ENCODE measurements at regions of chr19 and their contacts with region 1.

Region 1: GRCh38 chr19:18364826-18365528 is 21.0 kb upstream of the GDF15 start:
- DNase-seq: peak; percentile 82 to 87 (median 85)
- H3K4me3 ChIP-seq: peak overlapping the region in 2 of 7 experiments; percentile 20 to 25
- H3K27ac ChIP-seq: peak overlapping the region in 1 of 2 experiments; percentile 73
- H3K4me1 ChIP-seq: peaks cover 5 to 29% (median 21%) of the 10 kb centered on the region in 4 experiments
- H3K27me3 ChIP-seq: no peaks in the 10 kb centered on the region

Region 2: DNA sequence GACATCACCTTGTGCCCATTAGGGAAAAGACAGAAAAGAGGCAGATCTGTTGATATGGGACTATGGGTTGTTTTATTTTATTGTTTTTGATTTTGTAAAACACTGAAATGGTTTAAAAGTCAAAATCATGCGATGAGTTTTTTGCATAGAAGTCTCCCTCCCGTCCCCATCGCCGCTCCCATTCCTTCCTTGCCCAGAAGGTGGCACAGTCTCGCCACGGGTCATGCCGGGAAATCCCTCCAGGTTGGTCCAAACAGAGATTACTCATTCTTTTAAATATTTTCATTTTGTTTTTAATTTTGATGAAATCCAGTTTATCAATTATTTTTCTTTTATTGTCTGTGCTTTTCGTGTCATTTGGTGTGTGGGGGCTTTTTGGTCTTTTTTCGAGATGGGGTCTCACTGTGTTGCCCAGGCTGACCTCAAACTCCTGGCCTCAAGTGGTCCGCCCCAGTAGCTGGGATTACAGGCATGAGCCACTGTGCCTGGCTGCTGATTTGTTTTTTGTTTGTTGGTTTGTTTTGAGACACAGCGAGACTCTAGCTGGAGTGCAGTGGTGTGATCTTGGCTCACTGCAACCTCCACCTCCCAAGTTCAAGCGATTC is 15.4 kb before region 1 on chr19:
- CTCF ChIA-PET with region 1: interaction called, 38 read pairs
- POLR2A ChIA-PET with region 1: no interaction called
- DNase-seq: peak; percentile 54 to 79 (median 73)
- H3K4me3 ChIP-seq: no peak overlapping the region
- H3K27ac ChIP-seq: no peak overlapping the region
- H3K4me1 ChIP-seq: no peaks in the 10 kb centered on the region
- H3K27me3 ChIP-seq: no peaks in the 10 kb centered on the region

Region 3: DNA sequence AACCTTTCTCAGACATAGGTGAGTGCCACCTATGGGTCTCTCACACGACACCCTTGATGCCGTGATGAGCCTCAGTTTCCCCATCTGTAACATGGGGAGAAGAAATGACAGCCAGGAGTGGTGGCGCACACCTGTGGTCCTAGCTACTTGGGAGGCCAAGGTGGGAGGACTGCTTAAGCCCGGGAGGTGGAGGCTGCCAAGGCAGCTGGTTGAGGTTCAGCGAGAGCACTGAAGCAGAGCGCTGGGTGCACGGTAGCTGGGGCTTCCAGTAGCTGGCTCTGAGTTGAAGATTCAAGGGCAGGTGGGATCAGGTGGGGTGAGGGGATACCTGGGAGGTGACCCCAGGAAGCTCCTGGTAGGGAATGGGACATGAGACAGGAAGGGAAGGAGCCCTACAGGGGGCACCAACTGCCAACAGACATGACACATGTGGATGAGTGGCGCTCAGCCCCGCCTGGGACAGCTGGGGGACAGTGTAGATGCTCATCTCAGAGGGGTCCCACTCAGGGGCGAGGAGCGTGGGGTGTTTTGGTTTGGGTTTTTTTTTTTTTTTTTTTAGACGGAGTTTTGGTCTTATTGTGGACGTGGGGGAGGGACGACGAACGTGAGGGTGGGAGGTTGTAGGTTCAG is 47.7 kb after region 1 on chr19:
- CTCF ChIA-PET with region 1: interaction called, 24 read pairs
- POLR2A ChIA-PET with region 1: interaction called, 3 read pairs
- DNase-seq: no peak
- H3K4me3 ChIP-seq: no peak overlapping the region
- H3K27ac ChIP-seq: no peak overlapping the region
- H3K4me1 ChIP-seq: peaks cover 3 to 50% (median 40%) of the 10 kb centered on the region in 4 experiments
- H3K27me3 ChIP-seq: no peaks in the 10 kb centered on the region

Region 4: GRCh38 chr19:18450931-18451845 is 86.2 kb after region 1 on chr19:
- CTCF ChIA-PET with region 1: no interaction called
- POLR2A ChIA-PET with region 1: no interaction called
- DNase-seq: peak; percentile 62 to 78 (median 72)
- H3K4me3 ChIP-seq: no peak overlapping the region
- H3K27ac ChIP-seq: no peak overlapping the region
- H3K4me1 ChIP-seq: peaks cover 0 to 3% (median 0%) of the 10 kb centered on the region in 4 experiments
- H3K27me3 ChIP-seq: no peaks in the 10 kb centered on the region

Region 5: GRCh38 chr19:18469069-18469846 is 104.3 kb after region 1 on chr19:
- CTCF ChIA-PET with region 1: no interaction called
- POLR2A ChIA-PET with region 1: no interaction called
- DNase-seq: peak; percentile 50 to 77 (median 67)
- H3K4me3 ChIP-seq: no peak overlapping the region
- H3K27ac ChIP-seq: no peak overlapping the region
- H3K4me1 ChIP-seq: peaks cover 0 to 18% (median 15%) of the 10 kb centered on the region in 4 experiments
- H3K27me3 ChIP-seq: no peaks in the 10 kb centered on the region